H1 (cell line): ENCODE measurements at regions of chr3 and their contacts with region 1.

Region 1: GRCh38 chr3:58188173-58188564 is 22.6 kb downstream of the DNASE1L3 start:
- DNase-seq: no peak
- H3K4me3 ChIP-seq: no peak overlapping the region
- H3K27ac ChIP-seq: no peak overlapping the region
- H3K4me1 ChIP-seq: peaks cover 0 to 4% (median 1%) of the 10 kb centered on the region in 4 experiments; a peak in 2 of 7 replicates
- H3K27me3 ChIP-seq: no peaks in the 10 kb centered on the region
- CTCF ChIP-seq: no peak
- EP300 ChIP-seq: no peak
- POLR2A ChIP-seq: no peak
- RAD21 ChIP-seq: no peak

Region 2: GRCh38 chr3:58144478-58145325 is 43.5 kb before region 1 on chr3:
- CTCF ChIA-PET with region 1: no interaction called
- POLR2A ChIA-PET with region 1: no interaction called
- DNase-seq: no peak
- H3K4me3 ChIP-seq: no peak overlapping the region
- H3K27ac ChIP-seq: no peak overlapping the region
- H3K4me1 ChIP-seq: no peaks in the 10 kb centered on the region; a peak in 1 of 7 replicates
- H3K27me3 ChIP-seq: no peaks in the 10 kb centered on the region
- CTCF ChIP-seq: no peak
- EP300 ChIP-seq: no peak
- POLR2A ChIP-seq: no peak
- RAD21 ChIP-seq: no peak

Region 3: DNA sequence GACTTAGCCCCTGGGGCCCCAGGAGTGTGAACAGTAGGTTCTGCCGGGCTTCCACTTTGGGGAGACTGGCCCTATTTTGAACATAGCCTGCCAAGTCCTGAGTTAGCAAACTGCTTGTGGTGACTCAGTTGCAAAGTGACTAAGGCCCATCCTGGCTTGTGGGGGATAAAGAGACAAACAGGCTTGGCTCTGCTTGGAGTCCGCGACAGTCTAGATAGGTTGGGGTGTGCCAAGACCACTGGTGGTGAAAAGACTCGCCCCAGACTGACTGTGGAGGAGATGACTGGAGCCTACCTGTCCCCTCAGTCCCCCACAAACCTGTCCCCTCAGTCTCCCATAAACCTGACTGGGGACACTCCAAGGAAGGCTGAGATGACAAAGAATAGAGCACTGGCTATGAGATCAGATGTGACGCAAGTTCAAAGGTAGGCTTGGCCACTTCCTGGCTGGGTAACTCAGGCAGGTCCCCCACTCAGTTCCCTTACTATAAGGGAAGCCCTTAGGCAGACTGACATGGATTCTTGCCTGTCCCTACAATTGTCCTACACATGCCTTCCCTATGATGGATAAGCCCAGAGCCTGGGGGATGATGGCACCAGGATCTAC is 18.3 kb after region 1 on chr3:
- CTCF ChIA-PET with region 1: interaction called, 13 read pairs
- POLR2A ChIA-PET with region 1: no interaction called
- DNase-seq: no peak
- H3K4me3 ChIP-seq: no peak overlapping the region
- H3K27ac ChIP-seq: no peak overlapping the region
- H3K4me1 ChIP-seq: no peaks in the 10 kb centered on the region
- H3K27me3 ChIP-seq: peaks cover 0 to 3% (median 0%) of the 10 kb centered on the region in 4 experiments; a peak in 1 of 7 replicates
- CTCF ChIP-seq: no peak
- EP300 ChIP-seq: no peak
- POLR2A ChIP-seq: no peak
- RAD21 ChIP-seq: no peak

Region 4: DNA sequence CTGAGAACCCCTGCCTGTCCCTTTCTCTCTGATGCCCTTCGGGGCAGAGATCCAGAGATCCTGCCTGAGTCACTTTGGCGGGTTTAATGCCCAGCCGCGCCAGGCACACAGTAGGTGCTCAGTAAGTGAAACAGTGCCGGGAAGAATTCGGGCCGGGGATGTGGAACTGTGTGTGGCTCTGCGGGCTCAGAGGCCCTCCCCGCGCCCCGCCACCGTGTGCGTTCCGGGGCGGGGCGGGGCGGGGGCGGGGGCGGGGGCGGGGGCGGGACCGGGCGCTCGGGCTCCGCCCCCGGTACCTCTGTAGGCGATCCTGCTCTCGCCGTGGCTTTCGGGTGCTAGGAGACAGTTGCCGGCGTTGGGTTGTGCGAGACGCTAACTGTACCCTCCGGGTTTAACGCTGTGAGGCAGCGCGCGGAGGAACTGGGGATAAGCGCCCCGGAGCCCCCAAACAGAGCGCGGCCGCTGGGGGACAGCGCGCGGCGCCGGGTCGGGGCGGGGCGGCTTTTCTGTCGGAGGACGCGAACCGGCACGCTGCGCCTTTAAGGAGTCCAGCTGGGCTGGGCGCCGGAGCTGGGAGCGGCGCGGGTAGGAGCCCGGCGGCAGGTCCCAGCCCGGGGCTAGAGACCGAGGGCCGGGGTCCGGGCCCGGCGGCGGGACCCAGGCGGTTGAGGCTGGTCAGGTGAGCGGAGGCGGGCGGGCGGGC is 49.2 kb after region 1 on chr3 and contains the start of gene ABHD6:
- CTCF ChIA-PET with region 1: interaction called, 11 read pairs
- POLR2A ChIA-PET with region 1: no interaction called
- DNase-seq: peak in 1 of 2 experiments; percentile 94
- H3K4me3 ChIP-seq: peak within 1 kb of the TSS; percentile 75 to 90 (median 87)
- H3K27ac ChIP-seq: no peak within 1 kb of the TSS
- H3K4me1 ChIP-seq: peaks cover 0 to 6% (median 3%) of the 10 kb centered on the region in 4 experiments; a peak in 5 of 7 replicates
- H3K27me3 ChIP-seq: peaks cover 9 to 31% (median 30%) of the 10 kb centered on the region in 4 experiments
- CTCF ChIP-seq: peak; percentile 2 to 48 (median 26)
- EP300 ChIP-seq: no peak
- POLR2A ChIP-seq: no peak
- RAD21 ChIP-seq: peak; percentile 52 to 63; a peak in 3 of 4 replicates
- total RNA-seq, gene ABHD6: 5.9 and 6.3 TPM in 2 replicates

Region 5: GRCh38 chr3:58305882-58306711 is 117.9 kb after region 1 on chr3 and contains the starts of genes HTD2 and RPP14:
- CTCF ChIA-PET with region 1: interaction called, 177 read pairs
- POLR2A ChIA-PET with region 1: interaction called, 19 read pairs
- DNase-seq: peak; percentile 90 to 99
- H3K4me3 ChIP-seq: peak within 1 kb of the TSS; percentile 82 to 95 (median 93)
- H3K27ac ChIP-seq: peak within 1 kb of the TSS; percentile 97
- H3K4me1 ChIP-seq: no peaks in the 10 kb centered on the region
- H3K27me3 ChIP-seq: no peaks in the 10 kb centered on the region; a peak in 1 of 7 replicates
- CTCF ChIP-seq: peak; percentile 86 to 98 (median 92)
- EP300 ChIP-seq: peak in 1 of 2 experiments; percentile 63; a peak in 1 of 3 replicates
- POLR2A ChIP-seq: peak; percentile 75 to 96
- RAD21 ChIP-seq: peak; percentile 28 to 47; a peak in 3 of 4 replicates
- total RNA-seq, gene HTD2: 10.3 and 10.8 TPM in 2 replicates
- total RNA-seq, gene RPP14: 19.8 and 23.4 TPM in 2 replicates